BJ (cell line): ENCODE measurements at regions of chr9 and their contacts with region 1.

Region 1: DNA sequence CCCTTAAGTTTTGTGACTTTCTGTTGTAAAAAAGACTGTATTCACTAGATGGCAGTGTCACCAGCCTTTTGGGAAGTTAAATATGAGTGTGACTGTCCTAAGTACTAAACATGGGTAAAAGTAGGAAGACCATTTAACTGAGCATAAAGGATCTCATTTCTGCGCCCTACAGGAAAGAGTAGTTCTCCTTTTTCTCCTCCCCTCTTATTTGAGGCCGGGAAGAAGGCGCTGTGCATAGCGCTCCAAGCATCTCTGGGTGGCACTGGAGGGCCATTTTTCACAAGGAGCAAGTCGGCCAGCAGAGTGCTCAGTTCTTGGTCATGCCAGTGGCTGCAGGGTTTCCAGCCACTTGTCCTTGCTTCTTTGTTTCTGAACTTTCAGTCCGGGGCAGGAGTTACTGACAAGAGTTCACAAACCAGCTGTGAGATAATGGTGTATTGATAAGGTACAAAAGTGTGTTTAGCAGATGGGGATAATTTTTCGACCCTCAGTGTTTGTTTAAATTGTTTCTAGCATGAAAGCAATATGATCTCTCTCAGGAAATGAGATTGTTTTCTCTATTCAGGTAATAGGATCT is 227.6 kb upstream of the DMRT1 start:
- DNase-seq: peak; percentile 41
- H3K4me3 ChIP-seq: no peak overlapping the region
- H3K27me3 ChIP-seq: no peaks in the 10 kb centered on the region; the same call in 1 of the 2 replicates
- CTCF ChIP-seq: peak; percentile 92

Region 2: GRCh38 chr9:757246-757881 is 143.5 kb after region 1 on chr9:
- CTCF ChIA-PET with region 1: interaction called, 86 read pairs
- POLR2A ChIA-PET with region 1: no interaction called
- DNase-seq: no peak
- H3K4me3 ChIP-seq: no peak overlapping the region
- H3K27me3 ChIP-seq: no peaks in the 10 kb centered on the region
- CTCF ChIP-seq: peak; percentile 67

Region 3: GRCh38 chr9:763692-764524 is 150.0 kb after region 1 on chr9:
- CTCF ChIA-PET with region 1: interaction called, 86 read pairs
- POLR2A ChIA-PET with region 1: no interaction called
- DNase-seq: no peak
- H3K4me3 ChIP-seq: no peak overlapping the region
- H3K27me3 ChIP-seq: peaks cover 2% of the 10 kb centered on the region
- CTCF ChIP-seq: peak; percentile 85

Region 4: GRCh38 chr9:806285-807156 is 192.7 kb after region 1 on chr9:
- CTCF ChIA-PET with region 1: interaction called, 11 read pairs
- POLR2A ChIA-PET with region 1: no interaction called
- DNase-seq: no peak
- H3K4me3 ChIP-seq: no peak overlapping the region
- H3K27me3 ChIP-seq: no peaks in the 10 kb centered on the region
- CTCF ChIP-seq: peak; percentile 74